ENCODE measurements at regions of chr6 and their contacts with region 1.

Region 1: DNA sequence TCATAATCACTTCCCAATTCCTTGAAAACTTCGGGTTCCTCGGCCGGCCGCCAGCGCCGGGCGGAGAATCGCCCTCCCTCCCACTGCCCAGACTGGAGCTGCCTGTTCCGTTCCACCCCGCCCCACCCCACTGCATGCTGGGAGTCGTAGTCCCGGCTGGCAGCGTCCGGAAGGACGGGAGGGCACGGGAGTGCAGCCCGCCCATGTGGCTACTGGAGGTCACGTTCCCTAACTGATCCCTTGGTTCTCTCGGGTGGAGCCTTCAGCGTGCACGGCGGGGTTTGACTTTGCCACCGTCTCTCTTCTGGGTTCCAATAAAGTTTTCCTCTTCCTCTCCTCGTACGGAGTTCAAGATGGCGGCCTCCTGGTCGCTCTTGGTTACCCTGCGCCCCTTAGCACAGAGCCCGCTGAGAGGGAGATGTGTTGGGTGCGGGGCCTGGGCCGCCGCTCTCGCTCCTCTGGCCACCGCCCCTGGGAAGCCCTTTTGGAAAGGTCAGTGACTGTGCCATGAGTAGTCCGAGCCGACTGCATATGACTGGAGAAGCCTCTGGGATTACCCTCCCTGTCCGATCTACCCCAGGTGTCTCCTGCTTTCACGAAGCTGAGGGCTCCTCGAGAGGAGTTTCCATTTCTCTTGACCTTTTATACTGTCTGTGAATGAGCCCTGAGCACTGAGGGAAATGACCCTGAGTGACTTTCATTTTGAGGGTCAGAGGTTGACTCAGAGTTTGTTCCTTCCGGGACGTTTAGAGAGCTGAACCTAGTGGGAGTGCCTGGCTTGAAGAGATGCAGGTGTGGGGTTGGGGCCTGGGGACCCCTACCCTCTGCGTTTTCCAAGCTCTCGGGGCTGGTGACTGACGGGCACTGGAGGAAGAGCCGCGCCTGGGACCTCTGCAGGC is at the start of gene AFG1L:
- DNase-seq: peak; percentile 86

Region 2: GRCh38 chr6:108165714-108166663 is 129.0 kb before region 1 on chr6 and contains the start of gene NR2E1:
- CTCF ChIA-PET with region 1: no interaction called
- POLR2A ChIA-PET with region 1: no interaction called
- DNase-seq: peak; percentile 43

Region 3: GRCh38 chr6:108260809-108261569 is 34.0 kb before region 1 on chr6 and contains the start of gene SNX3:
- CTCF ChIA-PET with region 1: no interaction called
- POLR2A ChIA-PET with region 1: interaction called, 18 read pairs
- DNase-seq: peak; percentile 92

Region 4: GRCh38 chr6:108312605-108313004 is 17.6 kb after region 1 on chr6:
- CTCF ChIA-PET with region 1: no interaction called
- POLR2A ChIA-PET with region 1: interaction called, 11 read pairs
- DNase-seq: no peak

Region 5: DNA sequence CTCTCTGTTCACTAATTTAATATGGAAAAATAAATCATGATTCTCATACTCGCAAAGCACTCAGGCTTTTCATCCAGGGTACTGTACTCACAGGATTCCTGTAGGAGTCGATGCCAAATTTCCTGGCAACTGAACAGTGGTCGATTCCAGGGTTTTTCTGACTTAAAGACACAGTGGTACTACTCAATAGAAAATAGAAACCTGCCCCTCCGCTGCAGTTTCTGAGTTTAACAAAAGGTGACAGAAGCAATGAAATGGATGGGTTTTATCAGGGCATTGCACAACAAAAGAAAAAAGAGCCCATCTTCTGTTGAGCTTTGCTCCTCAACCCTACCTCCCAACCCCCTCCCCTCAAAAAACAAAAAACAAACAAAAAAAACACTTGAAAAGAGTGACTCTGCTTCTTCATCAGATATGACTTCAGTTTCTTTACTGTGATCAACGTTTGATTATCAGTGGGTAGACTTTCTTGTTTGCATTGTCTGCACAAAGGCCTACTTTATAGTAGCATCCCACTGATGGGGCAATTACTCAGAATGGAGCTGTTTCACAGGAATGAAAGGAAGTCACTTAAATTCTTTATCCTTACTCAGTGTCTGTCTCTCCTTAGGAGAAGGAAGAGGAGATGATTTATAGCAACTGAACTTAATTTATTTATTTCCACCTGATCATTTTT is 169.6 kb after region 1 on chr6:
- CTCF ChIA-PET with region 1: no interaction called
- POLR2A ChIA-PET with region 1: no interaction called
- DNase-seq: no peak

Measured in HEK293T (cell line).